ENCODE measurements at regions of chr15 and their contacts with region 1.

Region 1: GRCh38 chr15:60326824-60327654 is 70.7 kb downstream of the ANXA2 start:
- DNase-seq: no peak
- ATAC-seq: no peak

Region 2: DNA sequence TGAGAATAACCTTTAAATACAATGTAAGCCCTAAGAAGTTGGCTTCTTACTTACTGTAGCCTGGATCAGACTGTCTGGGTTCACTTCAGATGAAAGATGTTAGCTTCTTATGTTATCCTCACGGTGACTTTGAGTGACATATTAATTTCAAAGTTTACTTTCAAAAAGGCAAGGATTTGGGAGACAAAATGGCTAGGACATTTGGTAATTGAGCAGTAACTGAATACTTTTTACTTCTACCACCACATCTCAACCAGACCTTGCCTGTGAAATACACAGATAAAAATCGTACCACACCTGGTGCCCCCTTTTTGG is 601.9 kb before region 1 on chr15:
- intact Hi-C with region 1: loop called (anchors 10 kb)
- DNase-seq: no peak
- ATAC-seq: no peak

Measured in Right ventricle myocardium superior (tissue), 1 donor.